SK-N-SH (cell line): ENCODE measurements at regions of chr4 and their contacts with region 1.

Region 1: DNA sequence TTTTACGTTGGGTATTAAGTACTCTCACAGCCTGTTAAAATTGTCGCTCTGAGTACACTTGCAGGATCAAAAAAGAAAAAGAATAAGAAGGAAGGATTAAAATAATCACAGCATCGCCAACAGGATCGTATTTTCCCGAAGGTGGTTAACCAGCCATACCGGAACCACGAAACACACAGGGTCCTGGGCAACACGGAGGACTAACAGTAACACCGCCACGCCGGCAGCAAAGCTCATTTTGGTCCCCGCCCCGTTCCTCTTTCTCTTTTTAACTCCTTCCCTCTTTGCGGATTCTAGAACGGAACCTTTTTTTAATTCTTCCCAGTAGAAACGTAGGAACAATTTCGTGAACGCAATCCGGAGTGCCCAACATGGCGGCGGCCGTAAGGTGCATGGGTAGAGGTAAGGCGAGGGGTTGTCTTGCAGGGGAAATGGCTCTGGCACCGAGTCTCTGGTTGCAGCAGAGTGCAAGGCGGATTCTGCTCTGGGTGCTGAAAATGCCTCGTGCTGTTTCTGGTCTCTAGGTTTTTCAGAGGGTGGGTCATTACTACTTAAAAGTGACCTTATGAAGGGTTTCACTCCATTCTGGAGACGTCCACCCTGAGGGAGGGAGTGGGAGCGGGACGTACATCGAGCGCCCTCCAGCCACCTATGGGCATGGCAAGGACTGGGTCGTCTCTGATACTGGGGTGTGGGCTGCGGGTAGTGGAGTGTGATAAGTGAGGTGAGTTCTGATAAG is at the start of gene MRPL1:
- DNase-seq: peak; percentile 77
- H3K4me3 ChIP-seq: peak within 1 kb of the TSS; percentile 69 to 98
- H3K27ac ChIP-seq: peak within 1 kb of the TSS; percentile 97 to 99
- H3K4me1 ChIP-seq: no peaks in the 10 kb centered on the region; a peak in 2 of 4 replicates
- H3K27me3 ChIP-seq: no peaks in the 10 kb centered on the region
- CTCF ChIP-seq: peak; percentile 9; the same call in 1 of the 2 replicates
- EP300 ChIP-seq: peak; percentile 6 to 56; a peak in 1 of 4 replicates
- RAD21 ChIP-seq: peak; percentile 35
- polyA plus RNA-seq, gene MRPL1: 11.0 and 13.0 TPM in 2 replicates

Region 2: GRCh38 chr4:77819843-77820648 is 42.6 kb before region 1 on chr4:
- CTCF ChIA-PET with region 1: interaction called, 17 read pairs
- POLR2A ChIA-PET with region 1: interaction called, 6 read pairs
- DNase-seq: peak; percentile 94
- H3K4me3 ChIP-seq: peak overlapping the region; percentile 95 to 97
- H3K27ac ChIP-seq: peak overlapping the region; percentile 69 to 96
- H3K4me1 ChIP-seq: peaks cover 0 to 12% of the 10 kb centered on the region in 2 experiments; a peak in 2 of 4 replicates
- H3K27me3 ChIP-seq: no peaks in the 10 kb centered on the region
- CTCF ChIP-seq: 0 out of 2 replicates have a peak, but pooled peaks have one; percentile 6
- EP300 ChIP-seq: no peak
- RAD21 ChIP-seq: no peak

Region 3: GRCh38 chr4:78222575-78223186 is 360.0 kb after region 1 on chr4:
- CTCF ChIA-PET with region 1: no interaction called
- POLR2A ChIA-PET with region 1: no interaction called
- DNase-seq: no peak
- H3K4me3 ChIP-seq: no peak overlapping the region
- H3K27ac ChIP-seq: no peak overlapping the region
- H3K4me1 ChIP-seq: peaks cover 0 to 2% of the 10 kb centered on the region in 2 experiments; a peak in 2 of 4 replicates
- H3K27me3 ChIP-seq: no peaks in the 10 kb centered on the region
- CTCF ChIP-seq: no peak
- EP300 ChIP-seq: no peak
- RAD21 ChIP-seq: no peak